CD4-positive, alpha-beta T cell (primary cell): ENCODE measurements at regions of chr6 and their contacts with region 1.

Region 1: DNA sequence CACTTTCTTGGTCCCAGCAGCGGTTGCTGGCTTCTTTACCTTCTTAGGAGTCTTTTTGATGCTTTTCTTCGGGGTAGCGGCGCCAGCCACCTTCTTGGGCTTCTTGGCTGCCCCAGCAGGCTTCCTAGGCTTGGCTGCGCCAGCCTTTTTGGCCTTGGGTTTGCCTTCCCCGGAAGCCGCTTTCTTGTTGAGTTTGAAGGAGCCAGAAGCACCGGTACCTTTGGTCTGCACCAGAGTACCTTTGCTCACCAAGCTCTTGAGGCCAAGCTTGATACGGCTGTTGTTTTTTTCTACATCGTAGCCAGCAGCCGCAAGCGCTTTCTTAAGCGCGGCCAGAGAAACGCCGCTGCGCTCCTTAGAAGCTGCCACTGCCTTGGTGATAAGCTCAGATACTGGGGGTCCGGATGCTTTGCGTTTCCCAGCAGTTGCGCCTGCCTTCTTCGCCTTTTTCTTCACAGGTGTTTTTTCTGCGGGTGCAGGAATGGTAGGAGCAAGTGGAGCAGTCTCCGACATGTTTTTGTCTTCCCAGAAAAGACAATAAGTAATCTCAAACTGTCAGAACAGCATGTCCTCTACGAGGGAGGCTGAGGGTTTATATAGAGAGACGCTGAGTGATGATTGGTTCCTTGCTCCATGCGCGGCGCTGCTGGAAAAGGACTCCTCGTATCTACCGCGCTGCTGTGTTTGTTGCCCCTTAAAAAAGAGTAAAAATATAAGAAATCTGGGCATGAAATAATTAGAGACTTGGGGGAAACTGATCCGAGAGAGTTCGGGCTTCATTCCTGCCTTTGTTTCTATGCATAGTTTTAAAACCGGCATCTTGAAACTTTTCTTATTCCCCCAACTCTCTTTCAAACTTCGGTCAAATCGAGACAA is 130.3 kb upstream of the BTN3A2 start:
- DNase-seq: peak; percentile 46 to 96 (median 67)
- ATAC-seq: peak; percentile 73
- H3K4me3 ChIP-seq: peak overlapping the region; percentile 66
- H3K4me3 Mint-ChIP-seq: peak overlapping the region; percentile 100
- H3K27ac ChIP-seq: peak overlapping the region; percentile 78 to 87
- H3K27ac Mint-ChIP-seq: peak overlapping the region; percentile 99
- H3K4me1 ChIP-seq: peaks cover 19% of the 10 kb centered on the region
- H3K4me1 Mint-ChIP-seq: peaks cover 42% of the 10 kb centered on the region
- H3K27me3 ChIP-seq: no peaks in the 10 kb centered on the region
- H3K27me3 Mint-ChIP-seq: peaks cover 8% of the 10 kb centered on the region
- CTCF ChIP-seq: no peak

Region 2: GRCh38 chr6:25942561-25943147 is 292.0 kb before region 1 on chr6:
- CTCF ChIA-PET with region 1: no interaction called
- POLR2A ChIA-PET with region 1: no interaction called
- intact Hi-C with region 1: no loop called
- DNase-seq: peak in 3 of 14 experiments; percentile 54 to 70 (median 66)
- ATAC-seq: peak; percentile 49
- H3K4me3 ChIP-seq: no peak overlapping the region
- H3K4me3 Mint-ChIP-seq: no peak overlapping the region
- H3K27ac ChIP-seq: no peak overlapping the region
- H3K27ac Mint-ChIP-seq: no peak overlapping the region
- H3K4me1 ChIP-seq: peaks cover 8% of the 10 kb centered on the region
- H3K4me1 Mint-ChIP-seq: peaks cover 9% of the 10 kb centered on the region
- H3K27me3 ChIP-seq: no peaks in the 10 kb centered on the region
- H3K27me3 Mint-ChIP-seq: peaks cover 5% of the 10 kb centered on the region
- CTCF ChIP-seq: peak; percentile 57

Region 3: GRCh38 chr6:26054857-26055669 is 179.6 kb before region 1 on chr6:
- CTCF ChIA-PET with region 1: no interaction called
- POLR2A ChIA-PET with region 1: interaction called, 39 read pairs
- intact Hi-C with region 1: no loop called
- DNase-seq: peak; percentile 68 to 97 (median 80)
- ATAC-seq: peak; percentile 71
- H3K4me3 ChIP-seq: peak overlapping the region; percentile 89
- H3K4me3 Mint-ChIP-seq: peak overlapping the region; percentile 97
- H3K27ac ChIP-seq: peak overlapping the region; percentile 81
- H3K27ac Mint-ChIP-seq: peak overlapping the region; percentile 96
- H3K4me1 ChIP-seq: peaks cover 29% of the 10 kb centered on the region
- H3K4me1 Mint-ChIP-seq: peaks cover 28% of the 10 kb centered on the region
- H3K27me3 ChIP-seq: no peaks in the 10 kb centered on the region
- H3K27me3 Mint-ChIP-seq: no peaks in the 10 kb centered on the region
- CTCF ChIP-seq: no peak

Region 4: GRCh38 chr6:26183581-26184366 is 50.9 kb before region 1 on chr6:
- CTCF ChIA-PET with region 1: interaction called, 5 read pairs
- POLR2A ChIA-PET with region 1: interaction called, 125 read pairs
- intact Hi-C with region 1: no loop called
- DNase-seq: peak in 13 of 14 experiments; percentile 20 to 94 (median 48)
- ATAC-seq: peak; percentile 89
- H3K4me3 ChIP-seq: peak overlapping the region; percentile 62
- H3K4me3 Mint-ChIP-seq: peak overlapping the region; percentile 99
- H3K27ac ChIP-seq: peak overlapping the region; percentile 43 to 72
- H3K27ac Mint-ChIP-seq: peak overlapping the region; percentile 86
- H3K4me1 ChIP-seq: peaks cover 34% of the 10 kb centered on the region
- H3K4me1 Mint-ChIP-seq: peaks cover 42% of the 10 kb centered on the region
- H3K27me3 ChIP-seq: no peaks in the 10 kb centered on the region
- H3K27me3 Mint-ChIP-seq: no peaks in the 10 kb centered on the region
- CTCF ChIP-seq: no peak

Region 5: DNA sequence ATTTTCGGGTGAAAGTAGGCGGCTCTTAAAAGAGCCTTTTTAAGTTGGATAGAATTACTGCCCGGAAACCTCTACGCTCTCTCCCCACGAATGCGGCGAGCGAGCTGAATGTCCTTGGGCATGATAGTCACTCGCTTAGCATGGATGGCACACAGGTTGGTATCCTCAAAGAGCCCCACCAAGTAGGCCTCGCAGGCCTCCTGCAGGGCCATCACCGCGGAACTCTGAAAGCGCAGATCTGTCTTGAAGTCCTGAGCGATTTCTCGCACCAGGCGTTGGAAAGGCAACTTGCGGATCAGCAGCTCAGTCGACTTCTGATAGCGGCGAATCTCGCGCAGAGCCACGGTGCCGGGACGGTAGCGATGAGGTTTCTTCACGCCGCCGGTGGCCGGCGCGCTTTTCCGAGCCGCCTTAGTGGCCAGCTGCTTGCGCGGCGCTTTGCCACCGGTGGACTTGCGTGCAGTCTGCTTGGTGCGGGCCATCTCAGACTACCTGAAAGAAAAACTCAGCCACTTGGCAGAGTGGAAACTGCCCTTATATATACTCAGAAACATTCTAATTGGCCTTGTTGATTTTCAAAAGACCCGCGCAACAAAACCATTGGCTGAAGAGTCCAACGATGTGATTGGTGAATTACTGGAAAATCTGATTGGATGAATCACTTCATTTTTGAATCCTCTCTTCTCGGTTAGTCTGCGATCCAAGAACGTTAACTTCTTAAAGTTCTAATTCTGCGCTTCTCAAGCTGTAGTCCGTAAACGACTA is 36.4 kb after region 1 on chr6:
- CTCF ChIA-PET with region 1: interaction called, 10 read pairs
- POLR2A ChIA-PET with region 1: interaction called, 374 read pairs
- intact Hi-C with region 1: loop called (anchors 1 to 5 kb)
- DNase-seq: peak; percentile 60 to 92 (median 75)
- ATAC-seq: peak; percentile 25
- H3K4me3 ChIP-seq: peak overlapping the region; percentile 59
- H3K4me3 Mint-ChIP-seq: no peak overlapping the region
- H3K27ac ChIP-seq: peak overlapping the region; percentile 82 to 84
- H3K27ac Mint-ChIP-seq: no peak overlapping the region
- H3K4me1 ChIP-seq: peaks cover 28% of the 10 kb centered on the region
- H3K4me1 Mint-ChIP-seq: peaks cover 7% of the 10 kb centered on the region
- H3K27me3 ChIP-seq: no peaks in the 10 kb centered on the region
- H3K27me3 Mint-ChIP-seq: no peaks in the 10 kb centered on the region
- CTCF ChIP-seq: no peak

Region 6: DNA sequence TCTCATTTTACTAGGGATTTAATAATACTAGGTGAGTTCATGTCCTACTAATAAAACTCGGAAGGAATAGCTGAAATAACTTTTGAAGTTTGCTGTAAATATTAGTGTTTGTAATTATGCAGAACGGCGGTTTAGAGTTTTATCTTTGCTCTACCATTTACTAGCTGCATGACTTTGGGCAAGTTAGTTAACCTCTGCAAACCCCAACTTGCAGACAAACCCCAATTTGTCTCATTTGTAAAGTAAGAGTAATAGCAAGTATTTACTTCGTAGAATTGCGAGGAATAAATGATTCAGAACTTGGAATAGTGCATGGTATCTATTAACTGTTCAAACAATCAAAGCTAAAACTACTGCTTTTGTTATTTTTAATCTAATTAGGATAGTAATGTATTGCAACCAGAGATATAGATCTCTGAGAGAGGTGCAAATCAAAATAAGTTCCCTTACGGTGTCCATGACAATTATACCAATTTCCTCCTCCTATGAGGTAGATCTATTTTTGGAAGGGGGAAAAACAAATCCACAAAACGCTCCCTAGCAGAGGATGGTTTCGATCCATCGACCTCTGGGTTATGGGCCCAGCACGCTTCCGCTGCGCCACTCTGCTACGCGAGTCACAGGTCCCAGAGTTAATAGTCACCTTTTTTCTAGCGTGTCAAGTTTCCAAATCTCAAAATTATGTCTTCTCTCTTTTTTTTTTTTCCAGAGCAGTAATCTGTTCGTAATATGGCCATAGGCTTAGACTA is 95.3 kb after region 1 on chr6:
- CTCF ChIA-PET with region 1: no interaction called
- POLR2A ChIA-PET with region 1: interaction called, 17 read pairs
- intact Hi-C with region 1: no loop called
- DNase-seq: peak in 13 of 14 experiments; percentile 23 to 84 (median 47)
- ATAC-seq: peak; percentile 21
- H3K4me3 ChIP-seq: no peak overlapping the region
- H3K4me3 Mint-ChIP-seq: peak overlapping the region; percentile 88
- H3K27ac ChIP-seq: no peak overlapping the region
- H3K27ac Mint-ChIP-seq: peak overlapping the region; percentile 92
- H3K4me1 ChIP-seq: peaks cover 27% of the 10 kb centered on the region
- H3K4me1 Mint-ChIP-seq: peaks cover 61% of the 10 kb centered on the region
- H3K27me3 ChIP-seq: peaks cover 23% of the 10 kb centered on the region in 2 experiments
- H3K27me3 Mint-ChIP-seq: peaks cover 41% of the 10 kb centered on the region
- CTCF ChIP-seq: no peak

Region 7: DNA sequence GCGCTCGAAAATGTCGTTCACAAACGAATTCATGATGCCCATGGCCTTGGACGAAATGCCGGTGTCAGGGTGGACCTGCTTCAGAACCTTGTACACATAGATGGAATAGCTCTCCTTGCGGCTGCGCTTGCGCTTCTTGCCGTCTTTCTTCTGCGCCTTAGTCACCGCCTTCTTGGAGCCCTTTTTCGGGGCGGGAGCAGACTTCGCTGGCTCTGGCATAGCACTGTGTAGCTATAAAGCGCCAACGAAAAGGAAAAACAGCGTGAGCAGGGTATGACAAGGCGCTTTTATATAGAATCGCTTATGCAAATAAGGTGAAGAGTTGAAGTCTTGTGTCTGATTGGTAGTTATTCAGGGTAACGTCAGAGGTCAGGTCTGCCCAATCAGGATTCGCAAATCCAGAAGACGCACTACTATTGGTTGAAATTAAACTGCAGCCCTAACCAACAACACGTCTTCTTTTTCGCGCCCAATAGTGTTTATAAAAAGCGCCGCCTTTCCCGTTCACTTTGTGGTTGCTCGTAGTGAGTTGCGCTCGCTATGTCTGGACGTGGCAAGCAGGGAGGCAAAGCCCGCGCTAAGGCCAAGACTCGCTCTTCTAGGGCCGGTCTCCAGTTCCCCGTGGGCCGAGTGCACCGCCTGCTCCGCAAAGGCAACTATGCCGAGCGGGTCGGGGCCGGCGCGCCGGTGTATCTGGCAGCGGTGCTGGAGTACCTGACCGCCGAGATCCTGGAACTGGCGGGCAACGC is 898.0 kb after region 1 on chr6:
- CTCF ChIA-PET with region 1: no interaction called
- POLR2A ChIA-PET with region 1: interaction called, 26 read pairs
- intact Hi-C with region 1: no loop called
- DNase-seq: peak; percentile 80 to 99 (median 88)
- ATAC-seq: peak; percentile 79
- H3K4me3 ChIP-seq: peak overlapping the region; percentile 75
- H3K4me3 Mint-ChIP-seq: no peak overlapping the region
- H3K27ac ChIP-seq: peak overlapping the region; percentile 79 to 81
- H3K27ac Mint-ChIP-seq: no peak overlapping the region
- H3K4me1 ChIP-seq: peaks cover 31% of the 10 kb centered on the region
- H3K4me1 Mint-ChIP-seq: peaks cover 12% of the 10 kb centered on the region
- H3K27me3 ChIP-seq: no peaks in the 10 kb centered on the region
- H3K27me3 Mint-ChIP-seq: no peaks in the 10 kb centered on the region
- CTCF ChIP-seq: no peak

Region 8: GRCh38 chr6:27871924-27872638 is 1637.4 kb after region 1 on chr6:
- CTCF ChIA-PET with region 1: no interaction called
- POLR2A ChIA-PET with region 1: interaction called, 40 read pairs
- intact Hi-C with region 1: no loop called
- DNase-seq: peak; percentile 71 to 97 (median 82)
- ATAC-seq: peak; percentile 75
- H3K4me3 ChIP-seq: peak overlapping the region; percentile 86
- H3K4me3 Mint-ChIP-seq: peak overlapping the region; percentile 93
- H3K27ac ChIP-seq: peak overlapping the region; percentile 89
- H3K27ac Mint-ChIP-seq: peak overlapping the region; percentile 93
- H3K4me1 ChIP-seq: peaks cover 39% of the 10 kb centered on the region
- H3K4me1 Mint-ChIP-seq: peaks cover 41% of the 10 kb centered on the region
- H3K27me3 ChIP-seq: no peaks in the 10 kb centered on the region
- H3K27me3 Mint-ChIP-seq: no peaks in the 10 kb centered on the region
- CTCF ChIP-seq: peak; percentile 43